Activated CD4-positive, alpha-beta memory T cell treated with anti-CD3 and anti-CD28 coated beads for 36 hours (primary cell): ENCODE measurements at regions of chr1 and their contacts with region 1.

Region 1: DNA sequence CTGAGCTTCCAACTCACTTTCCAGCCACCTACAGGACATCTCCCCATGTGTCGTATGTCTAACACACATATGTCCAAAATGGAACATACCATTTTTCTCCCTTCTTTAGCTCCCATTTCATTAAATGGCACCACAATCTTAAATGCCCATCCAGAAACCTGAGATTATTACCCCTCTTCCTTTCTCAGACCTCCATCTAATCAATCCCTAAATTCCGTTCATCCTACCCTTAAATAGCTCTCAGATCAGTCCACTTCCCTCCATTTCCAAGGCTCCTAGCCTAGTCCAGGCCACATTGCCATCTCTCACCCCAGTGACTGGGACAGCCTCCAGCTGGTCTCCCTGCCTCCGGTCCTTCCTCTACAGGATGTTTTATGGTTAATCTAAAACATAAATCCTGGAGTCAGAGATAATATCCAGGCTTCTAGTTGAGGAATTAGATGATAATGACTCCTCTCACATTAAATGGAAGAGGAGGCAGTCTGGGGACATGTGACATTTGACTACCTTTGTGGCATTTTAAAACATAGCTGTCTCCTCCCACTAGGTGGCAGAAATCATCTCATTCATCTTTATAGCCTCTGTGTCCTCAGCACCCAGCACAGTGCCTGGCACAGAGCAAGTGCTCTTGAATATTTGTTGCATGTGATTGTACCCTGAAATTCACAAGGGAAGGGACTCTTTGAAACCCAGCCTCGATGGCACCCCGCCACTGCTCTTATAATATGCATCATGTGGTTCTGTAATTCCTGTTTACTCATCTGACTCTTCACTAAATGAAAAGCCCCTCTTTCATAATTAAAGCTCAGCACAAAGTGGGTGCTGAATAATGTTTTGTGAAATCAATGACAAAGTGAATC is 102.3 kb downstream of the TMEM53 start:
- DNase-seq: peak; percentile 15
- H3K4me3 Mint-ChIP-seq: no peak overlapping the region
- H3K27ac Mint-ChIP-seq: no peak overlapping the region
- H3K4me1 Mint-ChIP-seq: no peaks in the 10 kb centered on the region
- H3K27me3 Mint-ChIP-seq: peaks cover 9% of the 10 kb centered on the region

Region 2: GRCh38 chr1:44377925-44378784 is 193.8 kb before region 1 on chr1:
- CTCF ChIA-PET with region 1: interaction called, 11 read pairs
- POLR2A ChIA-PET with region 1: no interaction called
- intact Hi-C with region 1: no loop called
- DNase-seq: peak; percentile 60
- H3K4me3 Mint-ChIP-seq: no peak overlapping the region
- H3K27ac Mint-ChIP-seq: no peak overlapping the region
- H3K4me1 Mint-ChIP-seq: no peaks in the 10 kb centered on the region
- H3K27me3 Mint-ChIP-seq: no peaks in the 10 kb centered on the region

Region 3: GRCh38 chr1:44531785-44532566 is 40.0 kb before region 1 on chr1:
- CTCF ChIA-PET with region 1: interaction called, 12 read pairs
- POLR2A ChIA-PET with region 1: no interaction called
- intact Hi-C with region 1: no loop called
- DNase-seq: peak; percentile 28
- H3K4me3 Mint-ChIP-seq: no peak overlapping the region
- H3K27ac Mint-ChIP-seq: no peak overlapping the region
- H3K4me1 Mint-ChIP-seq: peaks cover 8% of the 10 kb centered on the region
- H3K27me3 Mint-ChIP-seq: peaks cover 10% of the 10 kb centered on the region

Region 4: DNA sequence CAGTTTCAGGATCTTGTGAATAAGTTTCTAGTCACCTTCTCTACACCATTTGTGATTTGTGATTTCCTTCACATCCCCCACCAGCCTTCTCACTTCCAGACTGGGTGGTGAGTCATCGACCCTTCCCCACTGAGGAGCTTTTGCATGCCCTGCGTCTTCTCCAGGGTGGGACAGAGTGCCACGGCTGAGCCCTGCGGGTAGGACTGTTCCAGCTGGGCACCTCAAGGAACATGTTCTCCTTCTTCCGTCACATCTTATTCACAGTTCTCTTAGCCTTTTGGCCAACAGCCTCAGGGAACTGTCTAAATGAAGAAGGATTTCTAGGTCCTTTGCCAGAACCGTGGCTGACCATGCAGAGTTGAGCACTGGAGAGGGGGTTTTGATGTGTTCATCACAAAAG is 14.2 kb before region 1 on chr1:
- CTCF ChIA-PET with region 1: interaction called, 23 read pairs
- POLR2A ChIA-PET with region 1: no interaction called
- intact Hi-C with region 1: no loop called
- DNase-seq: no peak
- H3K4me3 Mint-ChIP-seq: no peak overlapping the region
- H3K27ac Mint-ChIP-seq: no peak overlapping the region
- H3K4me1 Mint-ChIP-seq: no peaks in the 10 kb centered on the region
- H3K27me3 Mint-ChIP-seq: peaks cover 5% of the 10 kb centered on the region

Region 5: DNA sequence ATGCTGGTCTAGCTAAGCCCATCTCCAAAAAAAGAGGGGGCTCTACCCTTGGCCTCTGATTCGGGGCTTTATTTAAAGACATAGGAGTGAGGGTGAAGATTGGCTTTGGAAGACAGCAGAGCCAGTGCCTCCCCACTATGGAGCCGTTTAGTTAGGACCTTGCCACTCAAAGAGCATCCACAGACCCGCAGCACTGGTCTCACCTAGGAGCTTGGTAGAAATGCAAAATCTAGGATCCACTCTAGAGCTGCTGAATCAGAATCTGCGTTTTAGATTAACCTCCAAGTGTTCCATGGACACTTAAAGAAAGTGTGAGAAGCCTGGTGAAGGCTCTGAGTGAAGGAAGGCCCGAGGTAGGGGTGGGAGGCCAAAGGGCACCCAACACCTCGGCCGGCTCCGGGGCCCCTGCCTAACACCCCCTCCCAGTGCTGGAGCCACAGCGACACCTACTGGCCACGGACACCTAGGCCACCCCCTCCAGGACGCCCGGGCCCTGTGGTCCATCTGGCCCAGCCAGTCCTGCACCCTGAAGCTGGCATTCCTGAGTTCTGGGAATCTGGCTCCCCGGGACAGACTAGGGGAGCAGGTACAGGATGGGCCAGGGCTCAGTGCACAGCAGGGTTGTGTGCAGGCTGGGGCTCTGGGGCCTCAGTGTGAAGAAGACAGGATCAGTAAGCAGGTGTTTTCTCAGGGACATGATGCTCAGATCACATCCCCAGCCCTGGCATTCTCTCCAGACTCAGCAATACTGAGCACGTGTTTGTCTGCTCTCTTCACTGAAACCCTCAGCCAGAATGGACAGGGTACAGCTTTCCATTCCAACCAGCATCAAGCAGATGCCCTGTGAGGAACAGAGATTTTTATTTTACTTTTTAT is 23.2 kb after region 1 on chr1:
- CTCF ChIA-PET with region 1: interaction called, 23 read pairs
- POLR2A ChIA-PET with region 1: no interaction called
- intact Hi-C with region 1: no loop called
- DNase-seq: peak; percentile 87
- H3K4me3 Mint-ChIP-seq: no peak overlapping the region
- H3K27ac Mint-ChIP-seq: no peak overlapping the region
- H3K4me1 Mint-ChIP-seq: no peaks in the 10 kb centered on the region
- H3K27me3 Mint-ChIP-seq: peaks cover 5% of the 10 kb centered on the region